ENCODE measurements at regions of chr19 and their contacts with region 1.

Region 1: DNA sequence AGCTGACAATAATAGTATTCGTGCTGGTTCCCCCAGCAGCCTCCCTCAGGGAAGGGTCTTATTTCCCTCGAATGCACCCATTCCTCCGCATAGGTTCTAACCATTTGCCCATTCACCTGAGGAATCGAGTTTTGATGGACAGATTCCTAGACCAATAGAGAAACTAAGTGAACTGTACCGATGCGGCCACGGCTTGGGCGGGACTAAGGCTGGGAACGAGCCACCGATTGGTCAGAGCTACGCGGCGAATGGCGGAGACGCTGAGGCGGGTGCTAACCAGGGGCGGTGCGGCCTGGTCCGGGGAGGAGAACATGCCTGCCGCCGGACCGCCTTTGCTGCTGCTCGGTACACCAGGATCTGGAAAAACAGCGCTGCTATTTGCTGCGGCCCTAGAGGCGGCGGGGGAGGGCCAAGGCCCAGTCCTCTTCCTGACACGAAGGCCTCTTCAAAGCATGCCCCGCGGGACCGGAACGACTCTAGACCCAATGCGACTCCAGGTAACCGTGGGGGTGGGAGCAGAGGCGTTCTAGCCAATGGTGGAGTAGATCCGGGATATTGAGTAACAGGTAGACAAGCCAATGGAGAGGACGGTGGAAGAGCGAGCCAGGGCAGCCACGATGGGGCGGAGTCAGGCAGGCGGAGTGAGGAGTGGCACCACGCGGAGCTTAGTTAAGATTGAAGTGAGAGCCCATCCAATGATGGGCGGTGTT is at the start of gene SWSAP1:
- H3K4me3 Mint-ChIP-seq: no peak within 1 kb of the TSS
- H3K27ac Mint-ChIP-seq: no peak within 1 kb of the TSS
- H3K4me1 Mint-ChIP-seq: peaks cover 29% of the 10 kb centered on the region
- H3K27me3 Mint-ChIP-seq: no peaks in the 10 kb centered on the region

Region 2: DNA sequence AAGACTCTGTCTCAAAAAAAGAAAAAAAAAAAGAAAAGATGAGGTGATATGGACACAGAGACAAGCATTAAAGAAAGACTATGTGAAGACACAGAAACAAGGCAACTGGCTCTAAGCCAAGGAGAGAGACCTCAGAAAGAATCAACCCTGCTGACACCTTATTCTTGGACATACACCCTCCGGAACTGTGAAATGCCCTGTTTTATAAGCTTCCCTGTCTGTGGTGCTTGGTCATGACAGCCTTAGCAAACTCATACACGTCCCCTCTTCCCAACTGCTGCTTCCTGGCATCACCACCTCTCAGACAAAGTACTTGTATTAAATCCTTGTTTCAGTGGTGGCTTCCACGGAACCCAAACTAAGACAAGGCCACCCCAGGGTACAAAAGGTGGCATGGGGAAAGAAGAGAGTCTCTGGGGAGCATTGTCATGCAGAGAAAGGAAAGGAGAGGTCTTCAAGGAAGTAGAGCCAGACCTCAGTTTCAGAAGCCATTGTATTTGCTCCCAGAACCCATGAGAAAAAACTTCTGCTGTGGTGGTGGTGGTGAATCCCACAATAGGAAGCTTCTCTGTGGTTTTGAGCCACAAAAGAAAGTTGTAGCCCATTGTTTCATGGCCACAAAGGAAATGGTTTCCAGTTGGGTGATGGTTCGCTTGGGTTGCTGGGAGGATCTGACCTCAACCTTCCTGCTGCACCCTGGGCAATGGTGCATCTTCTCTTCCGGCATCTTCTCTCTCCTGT is 94.9 kb before region 1 on chr19:
- intact Hi-C with region 1: no loop called
- H3K4me3 Mint-ChIP-seq: no peak overlapping the region
- H3K27ac Mint-ChIP-seq: no peak overlapping the region
- H3K4me1 Mint-ChIP-seq: peaks cover 9% of the 10 kb centered on the region
- H3K27me3 Mint-ChIP-seq: peaks cover 72% of the 10 kb centered on the region

Region 3: DNA sequence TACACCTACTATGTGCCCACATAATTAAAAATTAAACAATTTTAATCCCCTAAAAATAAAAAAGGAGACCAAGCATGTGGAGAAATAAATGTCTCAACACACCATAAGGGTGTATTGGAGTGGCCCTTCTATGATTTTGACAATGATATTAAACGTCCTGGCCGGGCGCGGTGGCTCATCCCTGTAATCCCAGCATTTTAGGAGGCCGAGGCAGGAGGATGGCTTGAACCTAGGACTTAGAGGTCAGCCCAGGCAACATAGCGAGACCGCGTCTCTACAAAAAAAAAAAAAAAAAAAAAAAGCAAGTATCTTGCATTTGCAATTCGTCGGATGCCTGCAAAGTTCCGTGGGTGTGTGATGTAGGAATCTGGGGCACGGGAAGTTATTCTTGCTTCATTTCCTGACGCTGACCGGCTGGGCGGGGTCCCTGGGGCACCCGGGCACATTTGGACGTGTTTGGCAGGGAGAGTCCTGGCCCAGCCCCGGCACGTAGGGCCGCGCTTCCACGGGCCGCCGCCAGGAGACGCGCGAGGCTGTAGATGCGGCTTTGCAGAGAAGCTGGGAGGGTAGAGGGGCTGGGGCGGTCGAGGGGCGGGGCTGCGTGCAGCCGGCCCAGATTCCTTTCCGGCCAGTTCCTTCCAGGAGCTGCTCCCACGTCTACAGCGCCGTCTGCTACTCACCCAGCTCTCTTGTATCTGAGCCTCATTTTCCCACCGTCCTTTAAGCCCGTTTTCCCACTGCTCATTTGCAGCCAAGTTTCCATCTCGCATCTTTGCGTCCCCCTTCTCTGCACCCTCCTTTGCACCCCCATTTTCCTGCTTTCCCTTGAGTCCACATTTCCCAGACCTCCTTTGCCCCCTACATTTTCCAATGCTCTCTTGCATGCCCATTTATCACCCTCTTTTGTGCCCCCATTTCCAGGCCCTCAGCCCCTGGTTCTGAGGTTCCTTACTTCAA is 80.9 kb before region 1 on chr19:
- intact Hi-C with region 1: loop called (anchors 2 kb)
- H3K4me3 Mint-ChIP-seq: peak overlapping the region; percentile 61
- H3K27ac Mint-ChIP-seq: peak overlapping the region; percentile 48
- H3K4me1 Mint-ChIP-seq: peaks cover 53% of the 10 kb centered on the region
- H3K27me3 Mint-ChIP-seq: peaks cover 4% of the 10 kb centered on the region

Region 4: GRCh38 chr19:11346092-11346940 is 28.3 kb before region 1 on chr19 and contains the starts of genes CCDC159 and TMEM205:
- intact Hi-C with region 1: loop called (anchors 1 kb)
- H3K4me3 Mint-ChIP-seq: peak within 1 kb of the TSS; percentile 93
- H3K27ac Mint-ChIP-seq: peak within 1 kb of the TSS; percentile 93
- H3K4me1 Mint-ChIP-seq: peaks cover 34% of the 10 kb centered on the region
- H3K27me3 Mint-ChIP-seq: no peaks in the 10 kb centered on the region

Region 5: DNA sequence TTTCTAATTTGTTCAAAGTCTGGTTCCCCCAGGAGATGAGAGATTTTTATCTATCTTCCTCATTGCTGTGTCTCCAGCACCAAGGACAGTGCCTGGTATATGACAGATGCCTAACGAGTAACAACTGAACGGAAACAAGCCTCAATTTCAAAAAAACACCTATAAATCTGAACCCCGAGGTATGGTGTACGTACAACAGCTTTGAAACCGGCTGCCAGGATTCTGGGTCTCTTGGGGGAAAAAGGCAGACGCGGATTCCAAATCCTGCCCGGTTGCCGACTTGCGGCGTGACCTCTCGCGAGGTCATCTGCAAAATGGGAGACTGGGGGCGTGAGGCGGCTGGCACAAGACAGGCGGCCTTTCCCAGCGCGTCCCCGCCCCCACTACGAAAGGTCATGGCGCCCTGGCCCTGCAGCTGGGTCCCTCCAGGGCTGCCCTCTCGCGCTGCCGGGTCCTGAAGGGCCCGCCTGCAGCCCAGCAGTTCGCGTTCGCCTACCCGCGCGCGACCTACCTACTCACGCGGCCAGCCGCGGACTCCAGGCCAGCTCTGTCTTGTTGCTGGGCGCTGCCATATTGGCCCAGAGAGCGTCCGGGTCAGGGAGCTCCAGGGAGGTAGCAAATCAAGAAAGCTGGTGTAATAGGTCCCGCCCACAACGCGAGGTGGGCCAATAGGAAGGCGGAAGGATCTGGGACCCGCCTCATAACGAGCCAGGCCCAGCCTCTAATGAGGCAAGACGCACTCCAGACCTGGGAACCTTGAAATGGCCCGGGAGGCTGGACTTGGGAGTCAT is 154.2 kb after region 1 on chr19 and contains the start of gene ECSIT:
- intact Hi-C with region 1: no loop called
- H3K4me3 Mint-ChIP-seq: peak within 1 kb of the TSS; percentile 97
- H3K27ac Mint-ChIP-seq: peak within 1 kb of the TSS; percentile 96
- H3K4me1 Mint-ChIP-seq: peaks cover 16% of the 10 kb centered on the region
- H3K27me3 Mint-ChIP-seq: no peaks in the 10 kb centered on the region

Measured in dendritic cell treated with granulocyte-macrophage colony-stimulating factor and Interleukin-4, amounts not matched to agents 40 ng/mL and 50 ng/mL, for 4 days (primary cell).